ENCODE measurements at regions of chr18 and their contacts with region 1.

Region 1: DNA sequence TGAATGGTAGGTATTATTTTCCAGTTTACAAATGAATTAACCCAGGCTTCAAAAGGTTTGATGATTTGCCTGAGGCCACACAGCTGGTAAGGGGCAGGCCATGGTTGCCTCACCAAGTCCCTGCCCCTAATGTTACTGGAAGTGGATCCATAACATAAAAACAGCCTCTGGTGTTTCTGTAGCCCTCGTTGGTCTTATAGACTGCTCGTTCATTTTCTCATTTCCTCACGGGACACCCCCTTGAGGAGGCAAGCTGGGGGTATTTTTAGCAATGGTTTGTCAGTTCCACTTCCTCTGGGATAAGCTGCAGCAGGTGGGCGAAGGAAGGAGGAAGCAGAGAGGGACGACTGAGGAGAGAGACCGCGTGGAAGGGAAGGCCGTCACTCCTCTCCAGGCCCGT is 32.9 kb upstream of the NDUFV2 start:
- DNase-seq: no peak
- ATAC-seq: no peak
- H3K4me3 ChIP-seq: no peak overlapping the region
- H3K4me3 Mint-ChIP-seq: no peak overlapping the region
- H3K27ac ChIP-seq: no peak overlapping the region
- H3K27ac Mint-ChIP-seq: no peak overlapping the region
- H3K4me1 ChIP-seq: peaks cover 3 to 5% of the 10 kb centered on the region in 2 experiments
- H3K4me1 Mint-ChIP-seq: peaks cover 6 to 23% (median 8%) of the 10 kb centered on the region in 3 donors
- H3K27me3 ChIP-seq: no peaks in the 10 kb centered on the region
- H3K27me3 Mint-ChIP-seq: no peaks in the 10 kb centered on the region

Region 2: GRCh38 chr18:9055185-9055584 is 14.4 kb before region 1 on chr18:
- CTCF ChIA-PET with region 1: no interaction called
- POLR2A ChIA-PET with region 1: no interaction called
- DNase-seq: no peak
- ATAC-seq: no peak
- H3K4me3 ChIP-seq: no peak overlapping the region
- H3K4me3 Mint-ChIP-seq: no peak overlapping the region
- H3K27ac ChIP-seq: no peak overlapping the region
- H3K27ac Mint-ChIP-seq: no peak overlapping the region
- H3K4me1 ChIP-seq: no peaks in the 10 kb centered on the region
- H3K4me1 Mint-ChIP-seq: peaks cover 0 to 3% (median 2%) of the 10 kb centered on the region in 3 donors
- H3K27me3 ChIP-seq: peaks cover 0 to 3% of the 10 kb centered on the region in 2 experiments
- H3K27me3 Mint-ChIP-seq: peaks cover 0 to 3% of the 10 kb centered on the region in 2 donors

Region 3: DNA sequence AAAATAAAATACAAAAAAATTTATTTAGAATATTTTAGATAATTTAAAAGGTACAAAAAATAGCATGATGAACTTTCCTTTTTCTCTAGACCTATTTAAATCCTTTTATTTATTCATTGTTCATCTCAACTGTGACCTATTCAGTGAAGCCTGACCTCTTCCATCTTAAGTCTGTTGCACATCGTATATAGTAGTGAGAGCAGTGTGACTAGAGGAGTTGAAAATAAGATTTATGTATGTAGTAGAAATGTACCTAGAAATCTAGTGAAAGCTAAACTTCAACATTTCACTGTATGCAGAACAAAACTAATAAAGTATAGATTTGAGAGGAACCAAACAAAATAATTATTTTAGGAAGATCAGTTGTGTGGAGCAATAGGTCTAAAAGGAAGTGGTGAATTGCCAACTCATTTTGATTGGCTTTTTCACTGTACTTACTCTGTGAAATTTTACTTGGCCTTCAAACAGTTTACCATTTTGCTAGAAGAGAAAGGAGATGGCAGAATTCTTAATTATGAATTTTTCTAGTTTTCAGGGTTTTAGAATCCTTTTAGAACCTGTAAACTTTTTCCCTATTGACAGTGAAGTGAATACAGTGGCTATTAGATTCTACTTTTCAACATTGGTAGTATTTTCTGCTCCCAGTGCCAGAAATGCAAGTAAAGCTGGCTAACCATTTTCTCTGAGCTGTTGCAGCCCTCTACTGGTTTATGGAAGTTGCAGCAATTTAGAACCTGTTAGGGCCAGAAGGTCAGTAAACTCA is 78.0 kb after region 1 on chr18:
- CTCF ChIA-PET with region 1: interaction called, 9 to 13 read pairs
- POLR2A ChIA-PET with region 1: interaction called in 1 of 2 experiments, 4 read pairs
- DNase-seq: peak in 18 of 35 experiments; percentile 10 to 77 (median 20)
- ATAC-seq: peak; percentile 66 to 76 (median 72)
- H3K4me3 ChIP-seq: no peak overlapping the region
- H3K4me3 Mint-ChIP-seq: peak overlapping the region; percentile 4 to 52 (median 43)
- H3K27ac ChIP-seq: peak overlapping the region; percentile 30
- H3K27ac Mint-ChIP-seq: peak overlapping the region; percentile 85 to 90
- H3K4me1 ChIP-seq: peaks cover 24 to 34% of the 10 kb centered on the region in 2 experiments
- H3K4me1 Mint-ChIP-seq: peaks cover 80 to 85% (median 82%) of the 10 kb centered on the region in 3 donors
- H3K27me3 ChIP-seq: no peaks in the 10 kb centered on the region
- H3K27me3 Mint-ChIP-seq: no peaks in the 10 kb centered on the region